Activated naive CD4-positive, alpha-beta T cell treated with anti-CD3 and anti-CD28 coated beads for 36 hours (primary cell): ENCODE measurements at regions of chr11 and their contacts with region 1.

Region 1: DNA sequence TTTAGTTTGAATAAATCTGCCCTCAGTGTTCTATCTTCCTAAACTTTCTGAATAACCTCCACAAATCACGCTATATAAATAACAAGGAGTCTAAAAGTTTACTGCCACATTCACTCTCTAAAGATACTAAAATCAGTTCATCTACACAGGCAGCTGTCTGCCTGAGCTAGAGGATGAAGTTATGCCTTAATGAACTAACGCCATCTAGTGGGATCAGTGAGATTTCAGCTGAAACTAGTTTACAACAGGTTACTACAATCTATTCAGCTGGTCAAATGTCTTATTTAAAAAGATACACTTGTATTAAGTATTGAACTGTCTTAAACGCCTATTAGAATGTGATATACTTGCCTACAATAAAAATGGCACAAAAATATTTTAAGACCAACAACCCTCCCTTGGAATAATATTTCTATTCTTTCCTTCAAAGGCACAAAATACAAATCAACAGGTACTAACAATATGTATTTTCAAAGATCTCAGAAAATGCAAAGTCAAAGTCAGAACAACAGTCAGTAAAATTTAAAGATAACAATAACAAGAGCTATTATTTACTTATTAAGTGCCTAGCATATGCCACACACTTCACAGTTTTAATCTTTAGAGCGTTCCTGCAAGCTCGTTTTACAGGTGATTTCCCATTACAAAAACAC is 84.1 kb downstream of the LARGE2 start:
- DNase-seq: peak; percentile 14
- H3K4me3 Mint-ChIP-seq: no peak overlapping the region
- H3K27ac Mint-ChIP-seq: no peak overlapping the region
- H3K4me1 Mint-ChIP-seq: no peaks in the 10 kb centered on the region
- H3K27me3 Mint-ChIP-seq: no peaks in the 10 kb centered on the region

Region 2: DNA sequence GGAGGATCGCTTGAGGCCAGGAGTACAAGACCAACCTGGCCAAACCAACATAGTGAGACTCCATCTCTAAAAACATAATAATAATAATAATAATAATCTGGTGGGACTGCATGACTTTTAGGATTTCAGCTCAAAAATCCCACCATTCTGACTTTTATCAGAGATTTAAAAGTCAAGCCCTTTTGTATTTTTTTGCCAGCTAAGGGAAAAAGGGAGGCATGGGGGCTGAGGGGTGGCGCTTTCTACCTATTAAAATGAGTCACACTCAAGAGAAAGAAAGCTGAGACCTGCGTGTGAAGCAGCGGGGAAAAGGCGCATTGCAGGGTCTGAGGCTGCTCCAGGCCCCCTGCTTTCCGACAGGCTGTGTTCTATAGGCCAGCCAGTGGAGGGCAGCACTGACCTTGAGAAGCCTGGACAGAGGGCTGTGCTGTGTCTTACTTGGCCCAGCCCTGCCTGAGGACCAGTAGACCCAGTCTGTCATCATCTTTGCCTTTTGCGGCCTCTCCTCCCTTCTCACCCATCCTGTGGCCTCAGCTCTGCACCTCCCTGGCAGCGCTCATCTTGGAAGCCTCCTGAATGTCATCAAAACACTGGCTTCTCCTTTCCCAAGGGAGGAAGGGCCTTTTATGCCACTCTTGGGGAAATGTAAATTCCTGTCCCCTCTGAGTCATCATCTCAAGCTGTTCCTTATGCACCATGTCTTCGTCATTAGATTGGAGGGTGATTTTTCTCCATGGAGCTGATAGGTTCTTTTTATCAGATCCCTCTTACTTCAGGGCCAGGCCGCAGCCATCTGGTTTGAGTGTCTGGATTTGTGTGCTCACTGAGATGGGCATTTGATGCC is 133.8 kb before region 1 on chr11:
- CTCF ChIA-PET with region 1: interaction called, 11 read pairs
- intact Hi-C with region 1: loop called (anchors 1 kb)
- DNase-seq: peak; percentile 55
- H3K4me3 Mint-ChIP-seq: no peak overlapping the region
- H3K27ac Mint-ChIP-seq: no peak overlapping the region
- H3K4me1 Mint-ChIP-seq: no peaks in the 10 kb centered on the region
- H3K27me3 Mint-ChIP-seq: no peaks in the 10 kb centered on the region

Region 3: DNA sequence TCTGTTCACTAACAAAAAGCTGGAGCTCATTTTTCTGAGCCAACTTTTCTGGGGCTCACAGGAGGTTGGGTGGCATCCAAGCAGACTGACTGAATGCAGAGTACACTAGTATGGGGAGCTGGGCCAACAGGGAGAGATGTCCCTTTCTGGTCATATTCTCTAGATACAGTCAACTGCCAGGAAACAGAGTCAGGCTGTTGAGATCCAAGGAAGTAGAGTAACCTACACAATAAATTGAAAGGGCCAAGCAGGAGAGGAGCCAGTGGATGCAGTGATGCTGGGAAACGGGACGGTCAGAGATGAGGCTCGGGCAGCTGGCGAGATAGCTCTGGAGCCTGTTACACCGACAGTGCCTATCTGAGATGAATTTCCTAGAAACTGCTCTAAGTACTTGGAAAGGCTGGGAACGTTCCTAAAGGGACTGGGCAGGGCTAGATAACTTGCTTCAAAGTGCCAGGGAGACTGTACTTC is 13.0 kb before region 1 on chr11:
- CTCF ChIA-PET with region 1: interaction called, 30 read pairs
- intact Hi-C with region 1: no loop called
- DNase-seq: no peak
- H3K4me3 Mint-ChIP-seq: no peak overlapping the region
- H3K27ac Mint-ChIP-seq: no peak overlapping the region
- H3K4me1 Mint-ChIP-seq: peaks cover 7% of the 10 kb centered on the region
- H3K27me3 Mint-ChIP-seq: no peaks in the 10 kb centered on the region

Region 4: GRCh38 chr11:46075168-46075567 is 68.6 kb after region 1 on chr11:
- CTCF ChIA-PET with region 1: no interaction called
- intact Hi-C with region 1: loop called (anchors 10 kb)
- DNase-seq: no peak
- H3K4me3 Mint-ChIP-seq: no peak overlapping the region
- H3K27ac Mint-ChIP-seq: peak overlapping the region; percentile 2
- H3K4me1 Mint-ChIP-seq: peaks cover 6% of the 10 kb centered on the region
- H3K27me3 Mint-ChIP-seq: no peaks in the 10 kb centered on the region